Heart left ventricle (tissue), 16 donors: ENCODE measurements at regions of chr11 and their contacts with region 1.

Region 1: GRCh38 chr11:130434521-130435223 is 6.3 kb upstream of the ADAMTS8 start:
- DNase-seq: peak; percentile 73 to 83 (median 77)
- ATAC-seq: peak; percentile 76 to 91 (median 90)
- H3K4me3 ChIP-seq: peak overlapping the region; percentile 9 to 70 (median 58)
- H3K27ac ChIP-seq: peak overlapping the region in 11 of 12 donors; percentile 33 to 82 (median 72)
- H3K4me1 ChIP-seq: peaks cover 0 to 19% (median 9%) of the 10 kb centered on the region in 12 donors
- H3K27me3 ChIP-seq: peaks cover 0 to 17% (median 0%) of the 10 kb centered on the region in 9 donors
- CTCF ChIP-seq: peak; percentile 69 to 87 (median 76)
- POLR2A ChIP-seq: no peak

Region 2: GRCh38 chr11:130383344-130384211 is 51.1 kb before region 1 on chr11:
- intact Hi-C with region 1: no loop called
- DNase-seq: no peak
- ATAC-seq: peak in 3 of 4 donors; percentile 40 to 56 (median 52)
- H3K4me3 ChIP-seq: no peak overlapping the region
- H3K27ac ChIP-seq: no peak overlapping the region
- H3K4me1 ChIP-seq: peaks cover 0 to 6% (median 0%) of the 10 kb centered on the region in 12 donors
- H3K27me3 ChIP-seq: no peaks in the 10 kb centered on the region
- CTCF ChIP-seq: no peak
- POLR2A ChIP-seq: no peak

Region 3: GRCh38 chr11:130726234-130727037 is 291.8 kb after region 1 on chr11:
- intact Hi-C with region 1: loop called in 1 of 10 experiments (anchors 5 kb)
- DNase-seq: peak; percentile 51 to 72 (median 64)
- ATAC-seq: peak; percentile 76 to 94 (median 90)
- H3K4me3 ChIP-seq: no peak overlapping the region
- H3K27ac ChIP-seq: peak overlapping the region in 9 of 12 donors; percentile 47 to 75 (median 60)
- H3K4me1 ChIP-seq: peaks cover 5 to 35% (median 28%) of the 10 kb centered on the region in 12 donors
- H3K27me3 ChIP-seq: no peaks in the 10 kb centered on the region
- CTCF ChIP-seq: no peak
- POLR2A ChIP-seq: no peak

Region 4: GRCh38 chr11:130737866-130738431 is 303.3 kb after region 1 on chr11:
- intact Hi-C with region 1: loop called in 1 of 10 experiments (anchors 5 kb)
- DNase-seq: peak; percentile 79 to 89 (median 84)
- ATAC-seq: peak; percentile 93 to 98 (median 96)
- H3K4me3 ChIP-seq: peak overlapping the region in 3 of 12 donors; percentile 1 to 12 (median 5)
- H3K27ac ChIP-seq: peak overlapping the region in 10 of 12 donors; percentile 7 to 74 (median 54)
- H3K4me1 ChIP-seq: peaks cover 3 to 24% (median 18%) of the 10 kb centered on the region in 12 donors
- H3K27me3 ChIP-seq: no peaks in the 10 kb centered on the region
- CTCF ChIP-seq: no peak
- POLR2A ChIP-seq: no peak

Region 5: GRCh38 chr11:130827451-130828377 is 393.0 kb after region 1 on chr11:
- intact Hi-C with region 1: loop called in 1 of 10 experiments (anchors 1 kb)
- DNase-seq: peak in 4 of 5 donors; percentile 63 to 86 (median 79)
- ATAC-seq: peak; percentile 83 to 94 (median 91)
- H3K4me3 ChIP-seq: no peak overlapping the region
- H3K27ac ChIP-seq: peak overlapping the region in 10 of 12 donors; percentile 24 to 73 (median 58)
- H3K4me1 ChIP-seq: peaks cover 0 to 42% (median 25%) of the 10 kb centered on the region in 12 donors
- H3K27me3 ChIP-seq: no peaks in the 10 kb centered on the region
- CTCF ChIP-seq: peak; percentile 13 to 62 (median 48)
- POLR2A ChIP-seq: no peak

Region 6: DNA sequence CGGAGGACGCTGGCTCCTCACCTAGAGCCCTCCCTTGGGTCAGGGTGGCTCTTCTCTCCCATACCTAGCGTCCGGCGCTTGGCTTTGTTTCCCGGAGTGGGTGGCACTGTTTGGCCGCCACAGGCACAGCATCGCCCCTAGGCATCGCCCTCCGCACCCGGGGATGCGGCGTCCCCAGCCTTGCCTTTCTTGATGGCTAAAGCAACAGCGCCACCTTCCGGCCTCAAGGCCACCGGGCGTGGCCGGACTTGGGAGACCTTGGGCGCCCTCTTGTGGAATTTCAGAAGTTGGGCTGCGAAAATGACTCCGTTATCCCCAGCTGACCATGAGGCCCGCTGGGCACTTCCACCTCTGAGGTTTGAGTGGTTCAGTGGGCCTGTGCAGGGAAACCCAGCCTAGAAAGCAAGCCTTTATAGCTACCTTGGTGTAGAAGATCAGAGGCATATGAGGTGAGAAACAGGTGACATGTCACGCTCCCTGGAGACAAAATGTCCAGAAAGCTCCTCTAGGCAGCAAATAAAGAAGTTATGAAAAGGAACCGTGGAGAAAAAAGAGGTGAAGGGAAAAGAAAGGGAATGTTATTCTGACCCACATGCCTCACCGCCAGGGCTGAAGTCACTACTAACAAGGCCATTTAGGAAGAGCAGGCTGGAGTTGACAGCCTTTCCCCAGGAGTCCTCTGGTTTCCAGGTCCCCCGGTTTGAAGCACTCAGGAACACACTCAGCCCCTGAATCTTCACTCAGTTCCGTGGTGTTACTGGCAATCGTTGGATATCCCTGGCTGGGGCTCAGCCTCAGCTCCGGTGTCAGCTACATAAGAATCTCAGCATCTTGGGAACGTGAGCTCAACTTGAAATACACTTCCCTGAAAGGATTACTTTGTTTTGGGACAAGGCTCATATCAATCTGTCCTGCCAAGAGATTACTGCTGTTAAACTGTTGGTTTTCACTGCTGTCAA is 427.5 kb after region 1 on chr11:
- intact Hi-C with region 1: loop called (anchors 1 to 2 kb)
- DNase-seq: peak; percentile 87 to 95 (median 90)
- ATAC-seq: peak; percentile 38 to 72 (median 58)
- H3K4me3 ChIP-seq: peak overlapping the region in 1 of 12 donors; percentile 2
- H3K27ac ChIP-seq: peak overlapping the region in 1 of 12 donors; percentile 28
- H3K4me1 ChIP-seq: peaks cover 0 to 37% (median 15%) of the 10 kb centered on the region in 12 donors
- H3K27me3 ChIP-seq: no peaks in the 10 kb centered on the region
- CTCF ChIP-seq: peak; percentile 99 to 100 (median 100)
- POLR2A ChIP-seq: no peak

Region 7: DNA sequence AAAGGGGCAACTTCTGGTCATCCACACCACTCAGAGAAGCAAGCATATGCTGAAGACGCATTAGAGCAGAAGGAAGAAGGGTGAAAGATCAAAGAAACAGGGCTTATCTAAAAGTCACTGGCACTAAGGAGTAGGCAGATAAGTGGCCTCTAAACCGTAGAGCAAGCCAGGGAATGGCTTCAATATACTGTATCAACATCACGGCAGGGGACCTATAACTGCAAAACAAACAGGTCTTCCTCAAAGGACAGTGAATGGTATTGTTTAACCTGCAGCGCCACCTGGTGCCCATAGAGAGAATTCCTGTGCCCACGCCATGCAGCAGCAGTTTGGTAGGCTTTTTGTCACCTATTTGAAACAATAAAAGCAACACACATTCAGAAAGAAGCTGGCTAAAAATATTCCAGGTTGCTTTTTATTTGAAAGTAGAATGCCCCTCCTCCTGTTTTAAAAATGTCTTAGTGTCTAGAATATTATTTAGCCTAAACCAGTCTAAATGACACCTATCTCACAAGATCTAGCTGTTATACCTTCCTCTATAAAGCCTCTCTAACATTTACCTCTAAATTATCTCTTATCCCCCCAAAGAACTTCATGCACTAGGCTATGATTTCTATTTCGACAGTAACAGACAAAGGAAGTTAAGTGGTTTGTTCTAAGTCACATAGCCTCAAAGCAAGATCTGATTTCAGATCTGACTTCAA is 459.8 kb after region 1 on chr11:
- intact Hi-C with region 1: loop called in 9 of 10 experiments (anchors 1 to 10 kb)
- DNase-seq: peak; percentile 58 to 68 (median 67)
- ATAC-seq: peak in 3 of 4 donors; percentile 27 to 51 (median 40)
- H3K4me3 ChIP-seq: no peak overlapping the region
- H3K27ac ChIP-seq: peak overlapping the region in 5 of 12 donors; percentile 18 to 96 (median 29)
- H3K4me1 ChIP-seq: peaks cover 0 to 69% (median 26%) of the 10 kb centered on the region in 12 donors
- H3K27me3 ChIP-seq: no peaks in the 10 kb centered on the region
- CTCF ChIP-seq: peak; percentile 80 to 90 (median 88)
- POLR2A ChIP-seq: no peak

Region 8: GRCh38 chr11:130979386-130979972 is 544.8 kb after region 1 on chr11:
- intact Hi-C with region 1: loop called in 1 of 10 experiments (anchors 5 kb)
- DNase-seq: no peak
- ATAC-seq: no peak
- H3K4me3 ChIP-seq: no peak overlapping the region
- H3K27ac ChIP-seq: no peak overlapping the region
- H3K4me1 ChIP-seq: no peaks in the 10 kb centered on the region
- H3K27me3 ChIP-seq: peaks cover 0 to 6% (median 0%) of the 10 kb centered on the region in 9 donors
- CTCF ChIP-seq: peak; percentile 22 to 50 (median 34)
- POLR2A ChIP-seq: no peak